ENCODE measurements at regions of chr13 and their contacts with region 1.

Region 1: GRCh38 chr13:24254146-24254841 is 55.1 kb upstream of the C1QTNF9 start:
- DNase-seq: peak; percentile 81
- ATAC-seq: peak; percentile 65
- H3K4me3 Mint-ChIP-seq: peak overlapping the region; percentile 87
- H3K27ac Mint-ChIP-seq: peak overlapping the region; percentile 94
- H3K4me1 Mint-ChIP-seq: peaks cover 85% of the 10 kb centered on the region
- H3K27me3 Mint-ChIP-seq: no peaks in the 10 kb centered on the region

Region 2: GRCh38 chr13:24270639-24271141 is 16.4 kb after region 1 on chr13:
- CTCF ChIA-PET with region 1: interaction called, 81 read pairs
- POLR2A ChIA-PET with region 1: interaction called, 312 read pairs
- DNase-seq: peak; percentile 74
- ATAC-seq: peak; percentile 52
- H3K4me3 Mint-ChIP-seq: peak overlapping the region; percentile 84
- H3K27ac Mint-ChIP-seq: peak overlapping the region; percentile 96
- H3K4me1 Mint-ChIP-seq: peaks cover 88% of the 10 kb centered on the region
- H3K27me3 Mint-ChIP-seq: no peaks in the 10 kb centered on the region